ENCODE measurements at regions of chr12 and their contacts with region 1.

Region 1: DNA sequence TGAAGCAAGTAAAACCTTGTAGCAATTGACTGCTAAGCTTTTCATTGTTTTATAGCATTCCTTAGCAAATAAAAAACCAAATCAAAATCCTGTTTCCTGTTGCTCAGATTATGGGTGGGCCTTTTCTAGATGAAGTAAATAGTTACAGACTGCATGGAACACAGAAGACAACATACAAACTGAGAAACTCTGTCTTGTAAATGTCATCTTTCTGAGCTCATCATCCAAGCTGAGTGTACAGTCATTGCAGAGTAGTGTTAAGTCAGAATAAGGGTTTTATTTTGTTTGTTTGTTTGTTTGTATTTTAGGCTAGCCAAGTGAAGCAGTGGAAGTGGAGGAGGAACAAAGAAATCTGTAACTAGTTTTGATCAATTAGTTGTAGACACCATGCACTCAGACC is 24.4 kb upstream of the BTG1 start:
- DNase-seq: no peak
- H3K4me3 Mint-ChIP-seq: no peak overlapping the region
- H3K27ac Mint-ChIP-seq: no peak overlapping the region
- H3K4me1 Mint-ChIP-seq: peaks cover 17% of the 10 kb centered on the region
- H3K27me3 Mint-ChIP-seq: no peaks in the 10 kb centered on the region

Region 2: DNA sequence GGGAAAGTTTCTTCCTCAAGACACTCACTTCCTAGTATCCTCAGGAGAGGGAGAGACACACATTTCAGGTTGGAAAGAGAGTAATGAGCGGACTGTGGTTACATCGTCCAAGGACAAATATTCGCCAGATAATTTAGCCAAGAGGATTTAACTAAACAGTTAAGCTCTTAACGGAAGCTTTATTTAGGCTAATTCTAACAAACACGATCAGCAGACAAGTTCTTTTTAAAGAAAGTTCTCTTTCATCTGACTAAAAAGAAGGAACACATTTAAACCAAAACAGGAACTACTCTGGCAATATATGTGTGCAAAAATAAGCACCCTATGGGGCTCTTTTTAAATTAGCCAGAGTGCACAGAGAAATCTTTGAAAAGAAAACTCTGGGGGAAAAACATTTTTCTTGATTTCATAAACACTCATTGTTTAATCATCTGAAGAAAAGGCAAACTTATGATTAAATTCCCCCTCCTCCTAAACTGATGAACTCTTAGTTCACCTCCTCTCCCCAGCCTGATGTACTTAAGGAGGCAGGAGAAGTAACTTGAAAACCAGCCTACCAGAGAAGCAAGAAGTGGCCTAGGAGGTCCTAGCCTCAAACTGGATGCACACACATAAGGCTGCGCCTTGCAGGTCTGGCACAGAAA is 11.1 kb before region 1 on chr12:
- CTCF ChIA-PET with region 1: no interaction called
- POLR2A ChIA-PET with region 1: interaction called, 3 read pairs
- intact Hi-C with region 1: loop called (anchors 1 kb)
- DNase-seq: no peak
- H3K4me3 Mint-ChIP-seq: peak overlapping the region; percentile 1
- H3K27ac Mint-ChIP-seq: peak overlapping the region; percentile 64
- H3K4me1 Mint-ChIP-seq: peaks cover 39% of the 10 kb centered on the region
- H3K27me3 Mint-ChIP-seq: no peaks in the 10 kb centered on the region